ENCODE measurements at regions of chr2 and their contacts with region 1.

Region 1: DNA sequence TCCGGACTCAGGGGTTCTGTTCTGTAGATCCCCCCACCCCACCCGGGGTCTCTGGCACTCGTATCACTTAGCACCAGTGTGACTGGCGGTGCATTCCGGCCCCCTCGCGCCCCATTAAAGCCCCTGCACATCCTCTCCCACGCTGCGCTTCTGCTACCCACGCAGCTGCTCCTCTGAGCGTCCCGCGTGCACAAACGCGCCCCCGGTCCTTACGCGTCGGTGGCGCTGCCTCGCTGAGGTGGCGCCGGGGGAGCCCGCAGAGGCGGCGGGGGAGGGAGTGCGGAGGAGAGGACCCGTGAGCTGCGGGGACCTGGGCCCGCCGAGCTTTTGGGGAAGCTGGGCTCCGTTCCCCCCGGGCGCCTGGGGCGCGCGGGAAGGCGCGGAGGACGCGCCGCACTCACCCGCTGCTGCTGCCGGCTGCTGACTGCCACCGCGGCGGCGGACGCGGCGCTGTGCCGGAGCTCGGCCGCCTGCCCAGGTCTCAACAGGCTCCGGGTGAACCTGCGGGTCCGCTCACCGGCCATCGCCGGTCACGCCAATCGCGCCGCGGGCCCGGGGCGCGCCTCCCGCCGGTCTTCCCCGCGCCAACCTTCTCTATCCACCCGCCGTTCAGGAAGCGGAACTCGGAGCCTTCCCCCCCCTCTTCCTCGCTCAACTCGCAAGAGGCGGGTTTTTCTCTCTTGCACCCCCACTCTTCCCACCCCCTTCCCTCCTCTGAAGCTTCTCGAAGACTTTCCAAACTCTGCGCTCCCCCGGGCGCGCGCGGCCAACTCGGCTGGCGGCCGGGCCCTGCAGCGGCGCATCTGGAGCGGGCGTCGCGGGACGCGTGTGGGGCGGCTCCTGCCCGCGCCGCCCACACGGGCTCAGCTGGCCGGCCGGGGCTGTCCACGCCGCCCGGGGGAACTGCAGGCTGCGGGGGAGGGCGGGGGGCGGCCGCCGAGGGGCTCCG is at the start of gene DOCK10:
- DNase-seq: peak; percentile 87
- H3K4me3 Mint-ChIP-seq: peak within 1 kb of the TSS; percentile 94
- H3K27ac Mint-ChIP-seq: peak within 1 kb of the TSS; percentile 98
- H3K4me1 Mint-ChIP-seq: peaks cover 49% of the 10 kb centered on the region
- H3K27me3 Mint-ChIP-seq: peaks cover 31% of the 10 kb centered on the region
- total RNA-seq, gene DOCK10: 137 and 138 TPM in 2 replicates

Region 2: GRCh38 chr2:224520064-224520463 is 522.1 kb before region 1 on chr2:
- intact Hi-C with region 1: loop called (anchors 1 kb)
- DNase-seq: peak; percentile 74
- H3K4me3 Mint-ChIP-seq: no peak overlapping the region
- H3K27ac Mint-ChIP-seq: peak overlapping the region; percentile 50
- H3K4me1 Mint-ChIP-seq: peaks cover 45% of the 10 kb centered on the region
- H3K27me3 Mint-ChIP-seq: no peaks in the 10 kb centered on the region

Region 3: GRCh38 chr2:224946895-224947294 is 95.2 kb before region 1 on chr2:
- intact Hi-C with region 1: loop called (anchors 1 kb)
- DNase-seq: peak; percentile 79
- H3K4me3 Mint-ChIP-seq: peak overlapping the region; percentile 82
- H3K27ac Mint-ChIP-seq: peak overlapping the region; percentile 84
- H3K4me1 Mint-ChIP-seq: peaks cover 60% of the 10 kb centered on the region
- H3K27me3 Mint-ChIP-seq: no peaks in the 10 kb centered on the region

Region 4: GRCh38 chr2:225010804-225011203 is 31.3 kb before region 1 on chr2:
- intact Hi-C with region 1: loop called (anchors 1 kb)
- DNase-seq: no peak
- H3K4me3 Mint-ChIP-seq: peak overlapping the region; percentile 41
- H3K27ac Mint-ChIP-seq: peak overlapping the region; percentile 89
- H3K4me1 Mint-ChIP-seq: peaks cover 63% of the 10 kb centered on the region
- H3K27me3 Mint-ChIP-seq: no peaks in the 10 kb centered on the region

Region 5: DNA sequence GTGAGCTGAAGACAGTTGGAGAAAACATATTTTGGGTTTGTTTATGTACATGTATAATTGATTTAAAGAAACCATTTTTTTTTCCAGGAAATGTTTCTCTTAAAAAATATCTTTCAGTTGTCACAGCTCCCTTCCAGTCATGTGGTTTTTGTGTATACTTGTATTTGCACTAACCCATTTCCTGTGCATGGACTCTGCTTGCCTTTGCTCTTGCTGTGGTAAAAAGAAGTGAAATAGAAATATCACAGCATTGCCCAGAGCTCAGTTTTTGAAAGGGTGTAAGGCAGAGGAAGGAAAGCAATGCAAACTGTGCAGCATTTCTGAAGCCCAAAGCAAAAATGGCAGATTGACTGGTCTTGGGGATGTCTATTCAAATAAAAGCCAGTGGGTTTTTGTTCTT is 10.6 kb after region 1 on chr2:
- intact Hi-C with region 1: loop called (anchors 1 kb)
- DNase-seq: peak; percentile 88
- H3K4me3 Mint-ChIP-seq: peak overlapping the region; percentile 4
- H3K27ac Mint-ChIP-seq: peak overlapping the region; percentile 52
- H3K4me1 Mint-ChIP-seq: peaks cover 48% of the 10 kb centered on the region
- H3K27me3 Mint-ChIP-seq: peaks cover 9% of the 10 kb centered on the region

Region 6: GRCh38 chr2:226835796-226836547 is 1793.8 kb after region 1 on chr2 and contains the start of gene RHBDD1:
- intact Hi-C with region 1: loop called (anchors 1 kb)
- DNase-seq: peak; percentile 98
- H3K4me3 Mint-ChIP-seq: peak within 1 kb of the TSS; percentile 95
- H3K27ac Mint-ChIP-seq: peak within 1 kb of the TSS; percentile 97
- H3K4me1 Mint-ChIP-seq: peaks cover 54% of the 10 kb centered on the region
- H3K27me3 Mint-ChIP-seq: no peaks in the 10 kb centered on the region
- total RNA-seq, gene RHBDD1: 41.3 and 44.7 TPM in 2 replicates